Activated naive CD4-positive, alpha-beta T cell treated with anti-CD3 and anti-CD28 coated beads for 36 hours (primary cell): ENCODE measurements at regions of chr14 and their contacts with region 1.

Region 1: GRCh38 chr14:61837336-61838229 is 75.4 kb downstream of the SNAPC1 start:
- DNase-seq: peak; percentile 88
- H3K4me3 Mint-ChIP-seq: no peak overlapping the region
- H3K27ac Mint-ChIP-seq: no peak overlapping the region
- H3K4me1 Mint-ChIP-seq: peaks cover 12% of the 10 kb centered on the region
- H3K27me3 Mint-ChIP-seq: no peaks in the 10 kb centered on the region

Region 2: GRCh38 chr14:61296719-61297502 is 540.7 kb before region 1 on chr14:
- CTCF ChIA-PET with region 1: interaction called, 13 read pairs
- intact Hi-C with region 1: loop called (anchors 1 kb)
- DNase-seq: peak; percentile 31
- H3K4me3 Mint-ChIP-seq: peak overlapping the region; percentile 36
- H3K27ac Mint-ChIP-seq: no peak overlapping the region
- H3K4me1 Mint-ChIP-seq: peaks cover 51% of the 10 kb centered on the region
- H3K27me3 Mint-ChIP-seq: no peaks in the 10 kb centered on the region

Region 3: GRCh38 chr14:61493239-61493638 is 344.3 kb before region 1 on chr14:
- CTCF ChIA-PET with region 1: interaction called, 10 read pairs
- intact Hi-C with region 1: no loop called
- DNase-seq: no peak
- H3K4me3 Mint-ChIP-seq: no peak overlapping the region
- H3K27ac Mint-ChIP-seq: no peak overlapping the region
- H3K4me1 Mint-ChIP-seq: peaks cover 42% of the 10 kb centered on the region
- H3K27me3 Mint-ChIP-seq: no peaks in the 10 kb centered on the region

Region 4: GRCh38 chr14:61662437-61663311 is 174.9 kb before region 1 on chr14:
- CTCF ChIA-PET with region 1: no interaction called
- intact Hi-C with region 1: loop called (anchors 5 kb)
- DNase-seq: peak; percentile 79
- H3K4me3 Mint-ChIP-seq: peak overlapping the region; percentile 63
- H3K27ac Mint-ChIP-seq: peak overlapping the region; percentile 98
- H3K4me1 Mint-ChIP-seq: peaks cover 69% of the 10 kb centered on the region
- H3K27me3 Mint-ChIP-seq: no peaks in the 10 kb centered on the region

Region 5: GRCh38 chr14:61744239-61744638 is 93.3 kb before region 1 on chr14:
- CTCF ChIA-PET with region 1: interaction called, 19 read pairs
- intact Hi-C with region 1: no loop called
- DNase-seq: no peak
- H3K4me3 Mint-ChIP-seq: no peak overlapping the region
- H3K27ac Mint-ChIP-seq: peak overlapping the region; percentile 70
- H3K4me1 Mint-ChIP-seq: peaks cover 18% of the 10 kb centered on the region
- H3K27me3 Mint-ChIP-seq: no peaks in the 10 kb centered on the region

Region 6: GRCh38 chr14:61768240-61768639 is 69.3 kb before region 1 on chr14:
- CTCF ChIA-PET with region 1: interaction called, 15 read pairs
- intact Hi-C with region 1: no loop called
- DNase-seq: no peak
- H3K4me3 Mint-ChIP-seq: no peak overlapping the region
- H3K27ac Mint-ChIP-seq: no peak overlapping the region
- H3K4me1 Mint-ChIP-seq: peaks cover 27% of the 10 kb centered on the region
- H3K27me3 Mint-ChIP-seq: no peaks in the 10 kb centered on the region

Region 7: GRCh38 chr14:62126879-62127478 is 289.4 kb after region 1 on chr14:
- CTCF ChIA-PET with region 1: interaction called, 23 read pairs
- intact Hi-C with region 1: no loop called
- DNase-seq: peak; percentile 5
- H3K4me3 Mint-ChIP-seq: no peak overlapping the region
- H3K27ac Mint-ChIP-seq: no peak overlapping the region
- H3K4me1 Mint-ChIP-seq: no peaks in the 10 kb centered on the region
- H3K27me3 Mint-ChIP-seq: peaks cover 29% of the 10 kb centered on the region